Endothelial cell of umbilical vein (primary cell): ENCODE measurements at regions of chr2 and their contacts with region 1.

Region 1: GRCh38 chr2:97663965-97664635 is at the start of gene ACTR1B:
- DNase-seq: peak; percentile 99
- H3K4me3 ChIP-seq: peak within 1 kb of the TSS; percentile 65 to 83 (median 78)
- H3K27ac ChIP-seq: peak within 1 kb of the TSS; percentile 85
- H3K4me1 ChIP-seq: peaks cover 18% of the 10 kb centered on the region
- H3K27me3 ChIP-seq: no peaks in the 10 kb centered on the region
- CTCF ChIP-seq: peak; percentile 55 to 56
- POLR2A ChIP-seq: peak; percentile 38
- total RNA-seq, gene ACTR1B: 49.8 and 50.2 TPM in 2 replicates

Region 2: DNA sequence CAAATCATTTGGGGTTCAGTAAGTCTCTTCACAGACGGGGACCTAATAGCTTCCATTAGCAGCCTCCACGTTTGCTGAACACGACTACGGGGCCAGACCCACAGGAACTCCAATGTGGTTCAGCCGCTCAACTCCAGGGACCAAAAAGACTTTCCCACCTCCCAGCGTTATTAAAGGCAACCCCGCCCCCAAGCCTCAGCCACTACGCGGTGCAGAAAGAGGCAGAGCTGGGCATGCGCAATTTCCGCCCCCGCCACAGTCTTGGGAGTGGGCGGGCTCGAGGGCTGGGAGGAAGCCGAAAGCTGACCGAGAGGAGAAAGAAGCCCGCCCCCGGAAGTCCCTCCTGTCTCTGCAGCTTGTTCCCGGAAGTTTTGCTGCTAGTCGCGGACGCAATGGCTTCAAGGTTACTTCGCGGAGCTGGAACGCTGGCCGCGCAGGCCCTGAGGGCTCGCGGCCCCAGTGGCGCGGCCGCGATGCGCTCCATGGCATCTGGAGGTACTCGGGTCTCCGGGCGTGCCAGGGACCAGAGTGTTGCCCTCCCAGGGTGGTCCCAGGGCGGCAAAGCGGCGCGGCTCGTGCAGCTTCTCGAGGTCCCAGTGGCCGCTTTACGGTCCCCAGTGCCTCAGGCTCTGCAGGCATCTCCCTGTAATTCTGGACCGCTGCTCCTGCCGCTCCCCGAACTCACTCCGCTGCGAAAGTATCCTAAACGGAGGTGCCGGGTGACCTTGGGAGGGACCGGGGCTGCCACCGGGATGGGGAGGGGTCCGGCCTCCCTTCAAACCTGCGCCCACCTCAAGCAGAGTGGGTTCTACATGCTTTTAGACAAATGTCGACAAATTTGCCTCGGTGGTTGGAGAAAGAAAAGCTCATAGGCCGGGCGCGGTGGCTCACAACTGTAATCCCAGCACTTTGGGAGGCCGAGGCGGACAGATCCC is 18.1 kb before region 1 on chr2 and contains the start of gene COX5B:
- CTCF ChIA-PET with region 1: interaction called, 45 read pairs
- POLR2A ChIA-PET with region 1: interaction called, 38 read pairs
- dilution Hi-C with region 1: no loop called
- intact Hi-C with region 1: loop called (anchors 1 kb)
- DNase-seq: peak; percentile 98
- H3K4me3 ChIP-seq: peak within 1 kb of the TSS; percentile 68 to 81 (median 77)
- H3K27ac ChIP-seq: peak within 1 kb of the TSS; percentile 69
- H3K4me1 ChIP-seq: peaks cover 15% of the 10 kb centered on the region
- H3K27me3 ChIP-seq: no peaks in the 10 kb centered on the region
- CTCF ChIP-seq: no peak
- POLR2A ChIP-seq: peak; percentile 91
- total RNA-seq, gene COX5B: 159 and 167 TPM in 2 replicates

Region 3: DNA sequence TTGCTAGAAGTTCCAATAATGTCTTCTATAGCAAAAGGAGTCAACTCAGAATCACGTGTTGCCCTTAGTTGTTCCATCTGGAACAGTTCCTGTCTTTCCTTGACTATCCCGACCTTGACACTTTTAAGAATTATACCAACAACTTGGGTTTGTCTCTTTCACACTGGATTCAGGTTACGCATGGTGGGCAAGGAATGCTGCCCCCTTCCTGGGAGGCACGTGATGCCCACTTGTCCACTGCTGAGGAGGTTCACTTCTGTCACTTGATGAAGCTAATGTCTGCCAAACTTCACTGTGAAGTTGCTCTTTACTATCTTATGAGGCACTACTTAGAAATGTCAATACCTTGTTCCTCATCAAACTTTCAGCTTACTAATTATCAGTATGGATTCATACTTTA is 13.0 kb before region 1 on chr2:
- CTCF ChIA-PET with region 1: interaction called, 45 read pairs
- POLR2A ChIA-PET with region 1: interaction called, 38 read pairs
- dilution Hi-C with region 1: no loop called
- intact Hi-C with region 1: loop called (anchors 1 kb)
- DNase-seq: no peak
- H3K4me3 ChIP-seq: no peak overlapping the region
- H3K27ac ChIP-seq: no peak overlapping the region
- H3K4me1 ChIP-seq: peaks cover 5% of the 10 kb centered on the region
- H3K27me3 ChIP-seq: no peaks in the 10 kb centered on the region
- CTCF ChIP-seq: no peak
- POLR2A ChIP-seq: no peak

Region 4: DNA sequence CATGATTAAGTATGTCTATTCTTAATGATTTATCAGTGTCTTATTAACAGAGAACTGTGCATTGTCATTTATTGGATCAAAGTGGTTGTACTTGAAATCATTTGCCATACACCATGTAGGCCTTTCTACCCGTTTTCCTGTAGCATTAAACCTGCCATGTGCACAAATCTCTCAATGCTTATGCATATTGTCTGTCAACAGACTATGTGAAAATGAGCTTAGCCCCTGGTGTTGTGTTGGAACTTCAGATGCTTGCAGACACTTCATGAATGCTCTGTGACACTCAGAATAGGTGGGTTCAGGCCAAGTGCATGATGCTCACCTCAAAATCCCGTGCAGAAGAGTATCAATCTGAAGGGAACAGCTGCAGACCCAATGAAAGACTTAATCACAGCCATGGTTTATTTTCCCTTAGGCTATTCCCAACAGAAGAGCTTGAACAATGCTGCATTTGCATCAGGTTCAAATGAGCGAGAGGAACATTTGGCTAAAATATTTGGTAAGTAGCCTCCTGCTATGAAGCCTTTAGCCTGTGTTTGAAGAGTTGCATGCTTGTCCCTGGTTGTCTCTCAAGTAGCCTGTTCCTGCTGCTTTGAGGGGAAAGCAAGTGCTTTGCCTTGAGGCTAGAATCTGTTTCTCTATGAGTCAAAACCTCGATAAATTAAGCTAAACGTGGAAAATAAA is 11.5 kb after region 1 on chr2:
- CTCF ChIA-PET with region 1: interaction called, 17 read pairs
- POLR2A ChIA-PET with region 1: interaction called, 4 read pairs
- dilution Hi-C with region 1: no loop called
- intact Hi-C with region 1: no loop called
- DNase-seq: no peak
- H3K4me3 ChIP-seq: no peak overlapping the region
- H3K27ac ChIP-seq: no peak overlapping the region
- H3K4me1 ChIP-seq: peaks cover 17% of the 10 kb centered on the region
- H3K27me3 ChIP-seq: no peaks in the 10 kb centered on the region
- CTCF ChIP-seq: no peak
- POLR2A ChIP-seq: no peak

Region 5: GRCh38 chr2:98634401-98635092 is 970.4 kb after region 1 on chr2:
- CTCF ChIA-PET with region 1: no interaction called
- POLR2A ChIA-PET with region 1: no interaction called
- dilution Hi-C with region 1: no loop called
- intact Hi-C with region 1: no loop called
- DNase-seq: peak; percentile 17
- H3K4me3 ChIP-seq: no peak overlapping the region
- H3K27ac ChIP-seq: no peak overlapping the region
- H3K4me1 ChIP-seq: no peaks in the 10 kb centered on the region
- H3K27me3 ChIP-seq: no peaks in the 10 kb centered on the region
- CTCF ChIP-seq: peak; percentile 36 to 43
- POLR2A ChIP-seq: no peak